ENCODE measurements at regions of chr20 and their contacts with region 1.

Region 1: DNA sequence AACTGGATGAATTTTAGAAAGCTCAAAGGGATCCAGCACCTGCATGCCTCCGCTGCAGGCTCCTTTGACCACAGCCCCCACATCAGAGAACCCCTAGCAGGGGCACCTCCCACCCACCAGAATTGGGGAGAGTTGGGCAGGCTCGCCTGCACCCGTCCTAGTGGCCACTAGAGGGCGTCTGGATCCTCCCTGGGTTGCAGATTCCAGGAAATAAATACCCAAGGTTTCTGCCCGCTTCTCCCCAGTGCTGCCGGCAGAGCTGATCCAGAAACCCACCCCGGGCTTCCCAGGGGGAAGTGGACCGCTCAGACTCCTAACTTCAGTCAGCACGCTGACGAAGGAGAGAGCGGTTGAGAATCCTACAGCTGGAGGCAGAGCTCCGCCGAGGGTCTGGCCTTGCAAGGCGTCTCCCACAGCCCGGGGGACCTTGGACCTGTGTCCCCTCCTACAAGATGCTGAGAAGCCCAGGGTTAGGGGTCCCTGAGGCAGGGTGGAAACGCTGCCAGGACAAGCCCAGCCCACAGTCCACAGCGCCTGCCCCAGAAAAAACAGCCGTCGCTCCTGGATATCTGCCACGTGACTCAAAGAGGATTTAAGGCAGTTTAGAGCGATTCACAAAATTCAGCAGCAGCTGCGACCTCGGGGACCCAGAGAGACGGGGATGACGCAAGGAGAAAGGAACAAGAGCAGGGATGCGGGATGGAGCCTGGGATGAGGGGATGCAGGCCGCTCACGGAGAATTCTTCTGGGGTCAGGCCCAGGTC is 32.6 kb upstream of the PHACTR3 start:
- DNase-seq: no peak
- ATAC-seq: peak; percentile 91
- H3K4me3 ChIP-seq: peak overlapping the region; percentile 19; the same call in 1 of the 2 replicates
- H3K27ac ChIP-seq: no peak overlapping the region
- H3K4me1 ChIP-seq: 0 out of 2 replicates have a peak, but pooled peaks cover 2% of the 10 kb centered on the region
- H3K27me3 ChIP-seq: no peaks in the 10 kb centered on the region; a peak in 2 of 4 replicates
- CTCF ChIP-seq: peak; percentile 76 to 97 (median 95)
- EP300 ChIP-seq: no peak
- POLR2A ChIP-seq: no peak
- RAD21 ChIP-seq: peak; percentile 39

Region 2: DNA sequence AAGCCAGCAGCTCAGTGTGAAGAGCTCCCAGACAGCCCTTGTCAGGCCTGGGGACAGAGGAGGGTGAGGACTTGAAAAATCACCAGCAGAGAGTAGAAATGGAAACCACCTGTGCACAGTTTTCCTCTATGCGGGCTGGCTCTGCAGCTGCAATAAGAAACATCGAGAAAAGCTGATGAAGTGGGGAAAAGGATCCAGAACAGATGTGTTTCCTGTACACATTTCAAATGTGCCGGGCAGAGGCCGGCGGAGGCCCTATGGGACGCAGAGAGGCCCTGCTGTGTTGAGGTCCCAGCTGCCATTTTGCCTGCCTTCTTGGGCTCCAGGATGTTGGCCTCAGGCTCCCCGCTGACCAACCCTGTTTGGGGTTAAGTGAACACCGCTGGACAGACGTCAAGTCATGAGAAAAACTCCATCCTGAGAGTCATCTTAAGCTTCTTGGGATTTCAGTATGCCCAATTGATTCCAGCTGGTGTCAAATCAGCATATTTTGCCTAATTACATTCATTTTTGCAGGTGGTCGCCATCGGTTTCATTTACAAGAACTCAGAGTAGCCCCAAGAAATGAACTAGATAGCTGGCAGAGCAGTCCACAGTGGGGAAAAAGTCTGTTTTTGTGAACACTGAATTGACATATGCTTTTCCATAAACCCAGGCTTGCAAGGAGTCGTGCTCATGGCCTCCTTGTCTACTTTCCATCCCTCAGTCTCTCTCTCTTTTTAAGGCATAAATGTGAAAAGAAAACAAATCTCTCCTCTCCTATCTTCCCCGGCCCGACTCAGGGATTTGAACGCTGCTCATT is 117.8 kb before region 1 on chr20:
- CTCF ChIA-PET with region 1: no interaction called
- POLR2A ChIA-PET with region 1: no interaction called
- RAD21 ChIA-PET with region 1: no interaction called
- SMC1A ChIA-PET with region 1: no interaction called
- in situ Hi-C with region 1: no loop called
- intact Hi-C with region 1: no loop called
- DNase-seq: no peak
- ATAC-seq: no peak
- H3K4me3 ChIP-seq: no peak overlapping the region
- H3K27ac ChIP-seq: no peak overlapping the region
- H3K4me1 ChIP-seq: no peaks in the 10 kb centered on the region
- H3K27me3 ChIP-seq: peaks cover 0 to 3% of the 10 kb centered on the region in 2 experiments; a peak in 2 of 4 replicates
- CTCF ChIP-seq: no peak
- EP300 ChIP-seq: no peak
- POLR2A ChIP-seq: no peak
- RAD21 ChIP-seq: no peak

Region 3: DNA sequence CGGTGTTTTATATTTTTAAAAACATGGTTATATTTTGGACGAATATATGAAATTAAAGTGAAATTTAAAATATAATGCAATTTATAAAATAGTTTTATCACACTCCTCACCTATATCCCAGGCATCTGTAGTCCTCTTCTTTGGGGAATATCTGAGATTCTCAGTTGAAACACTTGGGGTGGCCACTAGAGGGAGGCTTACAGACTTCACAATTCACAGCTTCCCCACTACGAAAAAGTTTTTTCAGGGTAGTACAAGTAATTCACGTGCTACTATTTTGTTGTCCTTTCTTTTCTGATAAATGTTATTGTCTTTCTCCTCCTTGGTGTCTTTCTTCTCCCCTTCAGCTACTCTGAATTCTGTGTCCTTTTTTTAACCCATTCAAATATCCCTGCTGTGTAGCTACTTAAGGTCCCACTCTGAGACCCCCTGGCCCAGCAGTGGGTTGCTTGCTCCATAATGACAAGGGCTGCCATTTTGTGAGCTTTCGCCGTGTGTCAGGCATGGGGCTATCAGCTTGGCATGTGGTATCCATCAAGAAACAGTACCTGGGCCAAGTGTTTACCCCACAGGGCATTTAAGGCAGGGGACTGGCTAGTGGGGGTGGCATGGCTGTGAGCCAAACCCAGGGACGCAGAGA is 11.0 kb before region 1 on chr20:
- CTCF ChIA-PET with region 1: interaction called, 24 read pairs
- POLR2A ChIA-PET with region 1: no interaction called
- RAD21 ChIA-PET with region 1: no interaction called
- SMC1A ChIA-PET with region 1: interaction called, 3 read pairs
- in situ Hi-C with region 1: no loop called
- intact Hi-C with region 1: no loop called
- DNase-seq: no peak
- ATAC-seq: peak; percentile 65
- H3K4me3 ChIP-seq: no peak overlapping the region
- H3K27ac ChIP-seq: no peak overlapping the region
- H3K4me1 ChIP-seq: no peaks in the 10 kb centered on the region
- H3K27me3 ChIP-seq: no peaks in the 10 kb centered on the region
- CTCF ChIP-seq: peak; percentile 39 to 65 (median 64)
- EP300 ChIP-seq: no peak
- POLR2A ChIP-seq: no peak
- RAD21 ChIP-seq: no peak

Region 4: DNA sequence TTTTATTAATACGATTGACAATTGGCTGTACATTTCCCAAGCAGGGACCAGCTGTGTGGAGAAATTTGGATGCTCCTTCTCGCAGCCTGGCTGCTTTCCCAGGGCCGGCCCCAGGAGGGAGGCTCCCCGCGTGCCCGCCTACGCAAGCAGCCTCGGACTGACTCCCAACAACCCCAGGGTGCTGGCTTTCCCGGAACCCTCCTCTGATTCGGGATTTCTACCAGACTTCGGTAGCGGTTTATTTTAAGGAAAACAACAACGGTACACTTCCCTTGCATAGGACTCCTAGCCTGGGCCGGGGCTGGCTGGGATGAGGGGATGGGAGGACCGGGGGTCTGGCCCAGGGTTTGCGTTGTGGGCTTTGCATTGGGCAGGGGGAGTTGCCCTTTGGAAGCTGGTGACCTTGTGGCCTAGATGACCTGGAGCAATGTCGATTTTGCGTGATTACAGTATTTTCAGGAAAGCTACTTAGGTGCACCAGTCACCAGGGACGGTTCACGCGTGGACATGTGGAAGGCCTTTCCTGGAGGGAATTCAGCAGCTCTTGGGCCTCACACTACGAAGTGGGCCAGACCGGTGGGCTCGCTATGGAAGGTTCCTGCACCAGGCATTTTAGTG is 11.8 kb after region 1 on chr20:
- CTCF ChIA-PET with region 1: interaction called, 22 read pairs
- POLR2A ChIA-PET with region 1: no interaction called
- RAD21 ChIA-PET with region 1: no interaction called
- SMC1A ChIA-PET with region 1: interaction called, 3 read pairs
- in situ Hi-C with region 1: no loop called
- intact Hi-C with region 1: no loop called
- DNase-seq: no peak
- ATAC-seq: no peak
- H3K4me3 ChIP-seq: no peak overlapping the region
- H3K27ac ChIP-seq: no peak overlapping the region
- H3K4me1 ChIP-seq: no peaks in the 10 kb centered on the region
- H3K27me3 ChIP-seq: peaks cover 0 to 3% of the 10 kb centered on the region in 2 experiments; a peak in 2 of 4 replicates
- CTCF ChIP-seq: no peak
- EP300 ChIP-seq: no peak
- POLR2A ChIP-seq: no peak
- RAD21 ChIP-seq: no peak

Region 5: DNA sequence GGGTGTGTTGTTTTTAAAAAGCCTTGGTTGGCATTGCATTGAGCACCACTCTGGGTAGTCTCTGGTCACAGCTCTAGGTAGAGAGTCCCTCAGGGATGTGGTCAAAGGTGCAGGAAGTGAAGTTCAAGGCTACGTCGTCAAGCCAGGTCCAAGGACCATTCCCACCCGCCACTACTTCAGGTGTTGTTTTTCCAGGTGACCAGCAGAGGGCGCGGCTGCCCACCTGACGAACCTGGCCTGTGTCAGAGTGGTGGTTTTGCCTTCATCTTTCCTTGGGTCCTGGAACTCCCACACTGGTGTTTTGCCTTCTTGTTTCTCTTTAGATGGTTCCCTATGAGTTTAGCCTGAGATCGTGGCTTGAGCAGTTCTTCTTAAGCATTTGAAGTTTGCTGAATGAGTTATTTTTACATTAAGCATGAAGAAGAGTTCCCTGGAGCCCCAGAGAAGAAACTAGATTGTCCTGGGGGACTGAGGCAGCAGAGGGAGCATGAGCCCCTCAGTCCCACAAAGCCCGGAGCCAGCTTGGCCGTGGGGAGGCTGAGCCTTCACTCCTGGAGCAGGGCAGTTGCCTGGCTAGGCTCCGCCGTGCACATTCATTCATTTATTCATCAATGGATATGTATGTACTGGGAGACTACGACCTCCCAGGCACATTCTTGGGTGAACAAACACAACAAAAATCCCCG is 27.0 kb after region 1 on chr20:
- CTCF ChIA-PET with region 1: interaction called, 13 read pairs
- POLR2A ChIA-PET with region 1: no interaction called
- RAD21 ChIA-PET with region 1: no interaction called
- SMC1A ChIA-PET with region 1: interaction called, 3 read pairs
- in situ Hi-C with region 1: no loop called
- intact Hi-C with region 1: no loop called
- DNase-seq: peak; percentile 8
- ATAC-seq: peak; percentile 88
- H3K4me3 ChIP-seq: no peak overlapping the region
- H3K27ac ChIP-seq: no peak overlapping the region
- H3K4me1 ChIP-seq: no peaks in the 10 kb centered on the region
- H3K27me3 ChIP-seq: peaks cover 2 to 4% of the 10 kb centered on the region in 2 experiments
- CTCF ChIP-seq: peak; percentile 84 to 90 (median 88)
- EP300 ChIP-seq: no peak
- POLR2A ChIP-seq: no peak
- RAD21 ChIP-seq: peak; percentile 76

Region 6: DNA sequence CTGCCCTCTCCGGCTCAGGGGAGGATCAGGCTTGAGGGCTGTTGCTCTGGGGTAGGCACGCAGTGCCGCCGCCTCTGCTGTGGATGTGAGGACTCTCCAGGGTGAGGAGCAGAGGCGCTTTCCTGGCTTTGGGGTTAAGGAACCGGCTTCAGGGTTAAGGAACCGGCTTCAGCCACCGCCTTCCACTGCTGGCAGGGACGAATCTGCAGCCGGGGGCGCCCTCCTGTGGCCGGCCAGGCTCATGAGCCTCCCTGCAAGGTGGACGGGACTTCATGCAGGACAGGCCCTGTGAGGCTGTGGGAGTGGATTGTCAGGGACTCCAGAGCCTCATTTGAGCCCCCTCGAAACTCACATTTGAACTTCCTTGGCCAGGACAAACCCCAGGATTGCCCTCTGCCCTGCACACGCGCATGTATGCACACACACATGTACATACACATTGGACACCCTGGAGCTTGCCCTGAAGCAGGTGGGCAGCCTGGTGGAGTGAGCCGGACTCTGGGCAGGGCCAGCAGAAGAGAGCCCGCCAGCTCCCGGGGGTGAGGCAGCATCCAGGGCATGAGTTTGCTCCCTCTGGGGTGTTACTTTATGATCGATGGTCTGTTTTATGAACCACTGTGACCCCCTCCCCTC is 179.4 kb after region 1 on chr20:
- CTCF ChIA-PET with region 1: interaction called, 26 read pairs
- POLR2A ChIA-PET with region 1: no interaction called
- RAD21 ChIA-PET with region 1: interaction called, 5 read pairs
- SMC1A ChIA-PET with region 1: no interaction called
- in situ Hi-C with region 1: loop called (anchors 5 kb)
- intact Hi-C with region 1: no loop called
- DNase-seq: peak; percentile 19
- ATAC-seq: peak; percentile 88
- H3K4me3 ChIP-seq: no peak overlapping the region
- H3K27ac ChIP-seq: peak overlapping the region; percentile 2; the same call in 1 of the 2 replicates
- H3K4me1 ChIP-seq: peaks cover 28% of the 10 kb centered on the region
- H3K27me3 ChIP-seq: no peaks in the 10 kb centered on the region; a peak in 1 of 4 replicates
- CTCF ChIP-seq: peak; percentile 84 to 88 (median 86)
- EP300 ChIP-seq: no peak
- POLR2A ChIP-seq: no peak
- RAD21 ChIP-seq: peak; percentile 86

Region 7: DNA sequence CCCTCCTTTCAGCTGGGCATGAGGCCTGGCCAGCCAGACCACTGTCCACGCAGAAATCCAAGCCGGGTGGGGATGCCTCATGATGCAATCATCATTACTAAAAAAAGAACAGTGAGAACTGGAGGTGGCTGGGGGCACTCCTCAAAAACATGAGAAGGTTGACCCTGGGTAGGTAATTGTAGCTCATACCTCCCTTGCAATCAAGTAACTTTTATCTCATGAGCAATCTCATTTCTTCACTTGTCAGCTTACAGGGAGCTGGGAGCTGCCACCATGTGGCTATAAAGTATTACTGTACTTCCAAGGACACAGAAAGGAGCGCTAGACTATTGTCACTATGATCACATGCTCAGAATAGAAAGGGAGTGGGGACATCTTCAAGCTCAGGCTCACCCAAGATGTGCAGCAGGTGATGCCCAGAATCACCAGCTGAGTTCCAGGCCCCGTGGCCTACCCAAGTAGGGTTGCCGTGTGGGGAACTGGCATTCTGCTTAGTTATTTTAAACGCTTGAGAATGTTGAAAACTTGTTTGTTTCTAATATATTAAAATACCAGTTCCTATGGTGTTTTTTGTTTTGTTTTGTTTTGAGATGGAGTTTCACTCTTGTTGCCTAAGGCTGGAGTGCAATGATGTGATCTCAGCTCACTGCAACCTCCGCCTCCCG is 383.5 kb after region 1 on chr20:
- CTCF ChIA-PET with region 1: no interaction called
- POLR2A ChIA-PET with region 1: no interaction called
- RAD21 ChIA-PET with region 1: no interaction called
- SMC1A ChIA-PET with region 1: no interaction called
- in situ Hi-C with region 1: no loop called
- intact Hi-C with region 1: no loop called
- DNase-seq: no peak
- ATAC-seq: peak; percentile 56
- H3K4me3 ChIP-seq: no peak overlapping the region
- H3K27ac ChIP-seq: no peak overlapping the region
- H3K4me1 ChIP-seq: no peaks in the 10 kb centered on the region
- H3K27me3 ChIP-seq: no peaks in the 10 kb centered on the region
- CTCF ChIP-seq: peak in 2 of 3 experiments; percentile 24 to 30; a peak in 3 of 6 replicates
- EP300 ChIP-seq: no peak
- POLR2A ChIP-seq: no peak
- RAD21 ChIP-seq: peak; percentile 25; the same call in 1 of the 2 replicates

Measured in GM12878 (cell line).